Activated CD4-positive, alpha-beta T cell treated with anti-CD3 and anti-CD28 coated beads for 36 hours (primary cell): ENCODE measurements at regions of chr9 and their contacts with region 1.

Region 1: GRCh38 chr9:104482921-104483570 is 21.0 kb upstream of the OR13F1 start:
- DNase-seq: no peak
- ATAC-seq: no peak
- H3K4me3 Mint-ChIP-seq: no peak overlapping the region
- H3K27ac Mint-ChIP-seq: no peak overlapping the region
- H3K4me1 Mint-ChIP-seq: no peaks in the 10 kb centered on the region
- H3K27me3 Mint-ChIP-seq: no peaks in the 10 kb centered on the region

Region 2: GRCh38 chr9:104506565-104506964 is 23.5 kb after region 1 on chr9:
- CTCF ChIA-PET with region 1: no interaction called
- POLR2A ChIA-PET with region 1: no interaction called
- intact Hi-C with region 1: no loop called
- DNase-seq: no peak
- ATAC-seq: no peak
- H3K4me3 Mint-ChIP-seq: no peak overlapping the region
- H3K27ac Mint-ChIP-seq: no peak overlapping the region
- H3K4me1 Mint-ChIP-seq: no peaks in the 10 kb centered on the region
- H3K27me3 Mint-ChIP-seq: no peaks in the 10 kb centered on the region

Region 3: GRCh38 chr9:104527109-104527508 is 44.1 kb after region 1 on chr9 and contains the start of gene OR13C4:
- CTCF ChIA-PET with region 1: no interaction called
- POLR2A ChIA-PET with region 1: no interaction called
- intact Hi-C with region 1: loop called in 1 of 2 experiments (anchors 5 kb)
- DNase-seq: no peak
- ATAC-seq: no peak
- H3K4me3 Mint-ChIP-seq: no peak within 1 kb of the TSS
- H3K27ac Mint-ChIP-seq: no peak within 1 kb of the TSS
- H3K4me1 Mint-ChIP-seq: no peaks in the 10 kb centered on the region
- H3K27me3 Mint-ChIP-seq: peaks cover 2% of the 10 kb centered on the region
- total RNA-seq, gene OR13C4: not detected